Naive thymus-derived CD8-positive, alpha-beta T cell (primary cell): ENCODE measurements at regions of chr14 and their contacts with region 1.

Region 1: GRCh38 chr14:22505697-22506377 is 83.2 kb downstream of the DAD1 start:
- DNase-seq: peak in 1 of 10 donors; percentile 26
- ATAC-seq: peak in 1 of 2 donors; percentile 38
- H3K4me3 Mint-ChIP-seq: peak overlapping the region; percentile 79 to 94 (median 86)
- H3K27ac Mint-ChIP-seq: peak overlapping the region; percentile 86 to 99 (median 98)
- H3K4me1 Mint-ChIP-seq: peaks cover 13 to 69% (median 57%) of the 10 kb centered on the region in 4 donors
- H3K27me3 Mint-ChIP-seq: no peaks in the 10 kb centered on the region

Region 2: GRCh38 chr14:21796916-21797315 is 708.9 kb before region 1 on chr14:
- POLR2A ChIA-PET with region 1: no interaction called
- DNase-seq: peak in 3 of 10 donors; percentile 16 to 30 (median 18)
- ATAC-seq: peak; percentile 35 to 50
- H3K4me3 Mint-ChIP-seq: peak overlapping the region in 9 of 10 donors; percentile 10 to 76 (median 53)
- H3K27ac Mint-ChIP-seq: peak overlapping the region in 7 of 10 donors; percentile 38 to 80 (median 52)
- H3K4me1 Mint-ChIP-seq: peaks cover 0 to 3% (median 1%) of the 10 kb centered on the region in 4 donors
- H3K27me3 Mint-ChIP-seq: peaks cover 2 to 18% (median 3%) of the 10 kb centered on the region in 5 donors

Region 3: GRCh38 chr14:22469538-22470303 is 36.1 kb before region 1 on chr14:
- POLR2A ChIA-PET with region 1: no interaction called
- DNase-seq: no peak
- ATAC-seq: no peak
- H3K4me3 Mint-ChIP-seq: peak overlapping the region in 6 of 10 donors; percentile 26 to 65 (median 40)
- H3K27ac Mint-ChIP-seq: peak overlapping the region in 1 of 10 donors; percentile 84
- H3K4me1 Mint-ChIP-seq: peaks cover 0 to 70% (median under 1%) of the 10 kb centered on the region in 4 donors
- H3K27me3 Mint-ChIP-seq: no peaks in the 10 kb centered on the region

Region 4: DNA sequence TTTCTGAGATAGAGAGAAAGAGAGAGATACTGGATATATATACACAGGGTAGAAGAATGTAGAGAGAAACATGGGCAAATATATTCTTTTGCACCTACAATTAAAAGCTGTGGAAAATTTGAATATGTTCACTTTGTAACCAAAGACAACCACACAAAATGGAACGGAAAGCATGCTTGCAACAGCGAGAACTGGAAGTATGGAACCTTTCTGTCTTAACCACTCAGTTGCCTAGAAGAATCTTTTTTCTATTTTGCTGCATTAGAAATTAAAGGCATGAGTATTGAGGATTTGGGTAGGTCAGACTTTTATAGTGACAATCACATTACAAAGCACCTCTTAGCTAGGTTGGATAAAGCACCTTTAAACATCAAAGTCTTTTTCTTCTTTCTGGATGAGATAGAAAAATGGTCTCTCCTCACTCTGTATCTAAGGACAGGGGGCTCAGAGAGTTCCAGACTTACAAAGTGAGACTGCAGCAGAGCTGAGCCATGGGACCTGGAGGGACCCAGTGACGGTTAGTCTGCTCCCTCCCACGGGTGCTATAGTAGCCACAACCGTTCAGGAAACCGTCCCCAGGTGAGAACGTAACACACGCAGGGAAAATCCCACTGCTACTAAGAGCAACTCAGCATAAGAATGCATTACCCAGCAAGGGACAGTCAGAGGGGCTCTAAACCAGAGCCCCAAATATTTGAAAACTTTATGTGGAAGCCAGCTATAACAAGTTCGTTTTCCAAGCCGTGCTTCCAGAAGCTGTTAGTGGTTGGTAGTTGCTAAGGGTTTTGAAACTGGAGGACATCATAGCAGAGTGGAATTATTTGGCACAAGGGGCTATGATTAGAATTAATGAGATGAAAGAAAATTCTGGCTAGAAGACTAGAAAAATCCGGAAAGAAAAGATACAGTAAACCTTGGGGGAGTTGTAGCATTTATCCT is 13.9 kb before region 1 on chr14:
- POLR2A ChIA-PET with region 1: interaction called, 140 read pairs
- DNase-seq: peak in 3 of 10 donors; percentile 25 to 41 (median 35)
- ATAC-seq: peak; percentile 27 to 71
- H3K4me3 Mint-ChIP-seq: peak overlapping the region; percentile 75 to 93 (median 88)
- H3K27ac Mint-ChIP-seq: peak overlapping the region in 9 of 10 donors; percentile 77 to 98 (median 89)
- H3K4me1 Mint-ChIP-seq: peaks cover 0 to 86% (median 12%) of the 10 kb centered on the region in 4 donors
- H3K27me3 Mint-ChIP-seq: no peaks in the 10 kb centered on the region

Region 5: GRCh38 chr14:22536853-22537338 is 31.1 kb after region 1 on chr14:
- POLR2A ChIA-PET with region 1: interaction called, 405 read pairs
- DNase-seq: peak in 5 of 10 donors; percentile 47 to 86 (median 69)
- ATAC-seq: peak; percentile 74 to 81
- H3K4me3 Mint-ChIP-seq: peak overlapping the region; percentile 70 to 89 (median 83)
- H3K27ac Mint-ChIP-seq: peak overlapping the region; percentile 90 to 100 (median 97)
- H3K4me1 Mint-ChIP-seq: peaks cover 57 to 96% (median 94%) of the 10 kb centered on the region in 4 donors
- H3K27me3 Mint-ChIP-seq: no peaks in the 10 kb centered on the region